Endothelial cell of umbilical vein (primary cell): ENCODE measurements at regions of chr12 and their contacts with region 1.

Region 1: GRCh38 chr12:87323369-87323768 is 705.8 kb downstream of the C12orf50 start:
- DNase-seq: peak; percentile 91
- H3K4me3 ChIP-seq: no peak overlapping the region
- H3K27ac ChIP-seq: peak overlapping the region; percentile 66
- H3K4me1 ChIP-seq: peaks cover 28% of the 10 kb centered on the region
- H3K27me3 ChIP-seq: no peaks in the 10 kb centered on the region
- CTCF ChIP-seq: no peak
- POLR2A ChIP-seq: no peak

Region 2: DNA sequence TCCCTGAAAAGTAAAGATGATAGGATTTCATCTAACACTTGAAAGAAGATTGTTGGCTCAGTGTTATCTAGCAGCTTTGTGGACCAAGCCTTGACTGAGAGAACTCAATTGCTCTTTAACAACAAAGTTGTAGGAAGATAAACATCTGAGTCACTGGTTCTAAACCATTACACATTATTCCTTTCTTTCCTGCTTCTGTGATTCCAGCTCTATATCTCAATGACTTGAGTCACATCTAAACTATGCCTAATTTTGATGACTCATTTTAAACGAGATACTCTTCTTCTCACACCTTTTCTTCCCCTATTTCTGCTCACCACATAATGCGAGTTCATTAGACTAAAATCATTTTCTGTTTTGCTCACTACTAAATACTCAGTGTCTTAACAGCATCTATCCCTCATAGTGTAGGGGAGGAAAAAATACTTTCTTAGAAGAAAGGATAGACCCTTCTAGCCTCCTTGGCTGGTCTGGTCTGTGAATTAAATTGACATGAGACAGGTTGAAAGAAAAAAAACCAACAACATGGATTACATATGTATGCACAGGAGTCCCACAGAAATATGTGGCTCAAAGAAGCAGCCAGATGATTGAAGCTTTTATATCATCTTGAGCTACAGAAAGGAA is 504.4 kb after region 1 on chr12:
- CTCF ChIA-PET with region 1: no interaction called
- POLR2A ChIA-PET with region 1: no interaction called
- dilution Hi-C with region 1: no loop called
- intact Hi-C with region 1: loop called (anchors 5 kb)
- DNase-seq: peak; percentile 89
- H3K4me3 ChIP-seq: peak overlapping the region in 1 of 3 experiments; percentile 18
- H3K27ac ChIP-seq: peak overlapping the region; percentile 83
- H3K4me1 ChIP-seq: peaks cover 25% of the 10 kb centered on the region
- H3K27me3 ChIP-seq: no peaks in the 10 kb centered on the region
- CTCF ChIP-seq: no peak
- POLR2A ChIP-seq: no peak